Keratinocyte (primary cell): ENCODE measurements at regions of chr7 and their contacts with region 1.

Region 1: GRCh38 chr7:96833676-96834453 is 124.2 kb upstream of the SEM1 start:
- DNase-seq: no peak
- H3K4me3 ChIP-seq: no peak overlapping the region
- H3K27ac ChIP-seq: no peak overlapping the region
- H3K4me1 ChIP-seq: no peaks in the 10 kb centered on the region
- H3K27me3 ChIP-seq: no peaks in the 10 kb centered on the region
- CTCF ChIP-seq: no peak

Region 2: DNA sequence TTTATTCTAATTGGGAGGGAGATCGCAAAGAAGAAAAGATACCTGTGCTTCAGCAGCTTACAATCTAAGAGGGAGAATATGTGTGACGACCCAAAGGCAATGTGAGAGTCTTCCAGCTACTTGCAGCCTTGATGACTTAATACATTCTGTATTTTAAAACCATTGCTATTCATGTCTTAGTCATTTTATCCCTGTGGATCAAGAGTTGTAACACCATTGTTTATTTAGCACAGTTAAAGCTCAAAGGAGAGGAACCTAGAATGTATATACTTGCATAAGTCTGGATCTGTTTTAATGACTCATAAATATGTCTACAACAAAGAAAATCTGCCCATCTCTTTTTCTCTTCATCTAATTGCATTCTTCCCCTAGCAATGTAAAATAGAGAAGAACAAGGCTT is 53.6 kb after region 1 on chr7:
- dilution Hi-C with region 1: loop called (anchors 5 kb)
- DNase-seq: peak; percentile 66
- H3K4me3 ChIP-seq: no peak overlapping the region
- H3K27ac ChIP-seq: no peak overlapping the region
- H3K4me1 ChIP-seq: peaks cover 8% of the 10 kb centered on the region
- H3K27me3 ChIP-seq: no peaks in the 10 kb centered on the region
- CTCF ChIP-seq: no peak

Region 3: GRCh38 chr7:97145068-97145467 is 311.2 kb after region 1 on chr7:
- dilution Hi-C with region 1: no loop called
- DNase-seq: no peak
- H3K4me3 ChIP-seq: no peak overlapping the region
- H3K27ac ChIP-seq: no peak overlapping the region
- H3K4me1 ChIP-seq: no peaks in the 10 kb centered on the region
- H3K27me3 ChIP-seq: no peaks in the 10 kb centered on the region
- CTCF ChIP-seq: peak in 2 of 3 experiments; percentile 15 to 25